SK-N-SH (cell line): ENCODE measurements at regions of chr7 and their contacts with region 1.

Region 1: DNA sequence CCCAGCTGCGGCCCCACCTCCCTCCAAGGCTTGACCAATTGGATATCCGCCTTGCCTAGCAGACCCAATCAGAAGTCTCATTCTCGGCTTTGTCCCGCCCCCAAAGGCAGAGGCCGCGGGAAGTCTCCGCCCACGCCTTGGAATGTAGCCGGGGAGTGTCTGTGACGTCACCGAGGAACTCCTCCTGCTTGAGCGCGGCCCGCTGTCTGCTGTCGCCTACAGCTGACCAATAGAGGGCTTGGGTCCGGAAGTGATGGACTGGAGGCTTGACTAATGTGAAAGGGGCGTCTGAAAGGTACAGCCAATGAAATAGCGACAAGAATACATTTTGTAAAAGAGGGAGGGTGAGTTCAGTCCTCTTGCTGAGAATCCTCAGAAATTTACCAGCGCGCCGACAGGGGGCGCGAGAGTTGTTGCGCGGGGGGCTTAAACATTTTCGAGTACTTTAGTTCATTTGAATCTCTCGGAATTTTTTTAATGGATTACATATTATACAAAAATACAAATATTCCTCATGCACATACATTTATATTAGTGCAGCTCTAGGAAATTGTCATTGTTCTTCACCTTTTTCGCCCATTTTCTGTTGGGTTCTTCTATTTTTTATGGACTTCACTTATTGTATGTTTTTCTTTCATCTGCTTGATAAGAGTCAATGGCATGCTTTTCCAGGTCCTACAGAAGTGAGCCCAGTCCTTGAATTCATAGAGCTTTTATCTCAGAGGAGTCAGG is 376 bp upstream of the CREB3L2 start:
- DNase-seq: peak; percentile 94
- H3K4me3 ChIP-seq: peak overlapping the region; percentile 84 to 93
- H3K27ac ChIP-seq: peak overlapping the region; percentile 88 to 90
- H3K4me1 ChIP-seq: peaks cover 14 to 25% of the 10 kb centered on the region in 2 experiments; a peak in 2 of 4 replicates
- H3K27me3 ChIP-seq: no peaks in the 10 kb centered on the region
- CTCF ChIP-seq: peak; percentile 100
- EP300 ChIP-seq: 0 out of 4 replicates have a peak, but pooled peaks of 1 of the 2 experiments have one; percentile 6
- RAD21 ChIP-seq: peak; percentile 72

Region 2: DNA sequence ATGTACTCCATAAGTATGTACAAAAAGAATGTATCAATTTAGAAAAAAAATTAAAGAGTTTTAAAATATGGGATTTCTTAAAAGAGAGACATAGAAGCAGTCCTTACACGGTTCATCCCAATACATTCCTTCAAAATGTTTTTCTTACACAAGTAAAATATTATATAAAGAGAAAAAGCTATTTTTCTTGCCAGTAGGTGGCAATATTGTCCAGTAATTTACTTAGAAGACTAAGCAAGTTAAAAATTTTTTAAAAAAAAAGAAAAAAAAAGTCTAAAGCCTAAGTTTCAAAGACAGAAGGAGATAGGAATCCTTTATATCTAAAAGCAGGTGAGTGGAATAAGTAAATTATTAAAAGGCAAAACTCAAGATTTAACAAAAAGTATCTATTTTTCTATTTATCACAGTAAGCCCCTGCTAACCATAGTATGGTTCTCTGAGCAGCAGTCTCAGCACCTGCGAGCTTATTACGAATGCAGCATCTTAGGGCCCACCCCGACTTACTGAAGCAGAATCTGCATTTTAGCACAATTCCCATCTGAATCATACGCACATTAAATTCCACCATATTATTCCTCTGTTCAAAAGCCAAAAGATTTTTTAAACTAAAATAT is 396.1 kb before region 1 on chr7:
- CTCF ChIA-PET with region 1: interaction called, 18 read pairs
- POLR2A ChIA-PET with region 1: no interaction called
- DNase-seq: no peak
- H3K4me3 ChIP-seq: no peak overlapping the region; a peak in 1 of 4 replicates
- H3K27ac ChIP-seq: no peak overlapping the region
- H3K4me1 ChIP-seq: no peaks in the 10 kb centered on the region; a peak in 1 of 4 replicates
- H3K27me3 ChIP-seq: no peaks in the 10 kb centered on the region
- CTCF ChIP-seq: peak; percentile 91
- EP300 ChIP-seq: no peak
- RAD21 ChIP-seq: peak; percentile 64

Region 3: GRCh38 chr7:137742051-137742450 is 260.2 kb before region 1 on chr7:
- CTCF ChIA-PET with region 1: no interaction called
- POLR2A ChIA-PET with region 1: no interaction called
- DNase-seq: no peak
- H3K4me3 ChIP-seq: no peak overlapping the region
- H3K27ac ChIP-seq: no peak overlapping the region
- H3K4me1 ChIP-seq: no peaks in the 10 kb centered on the region; a peak in 2 of 4 replicates
- H3K27me3 ChIP-seq: no peaks in the 10 kb centered on the region
- CTCF ChIP-seq: no peak
- EP300 ChIP-seq: no peak
- RAD21 ChIP-seq: no peak

Region 4: GRCh38 chr7:137920637-137921399 is 81.4 kb before region 1 on chr7:
- CTCF ChIA-PET with region 1: interaction called, 642 read pairs
- POLR2A ChIA-PET with region 1: no interaction called
- DNase-seq: no peak
- H3K4me3 ChIP-seq: no peak overlapping the region
- H3K27ac ChIP-seq: no peak overlapping the region
- H3K4me1 ChIP-seq: peaks cover 9 to 15% of the 10 kb centered on the region in 2 experiments; a peak in 3 of 4 replicates
- H3K27me3 ChIP-seq: no peaks in the 10 kb centered on the region
- CTCF ChIP-seq: no peak
- EP300 ChIP-seq: no peak
- RAD21 ChIP-seq: no peak

Region 5: DNA sequence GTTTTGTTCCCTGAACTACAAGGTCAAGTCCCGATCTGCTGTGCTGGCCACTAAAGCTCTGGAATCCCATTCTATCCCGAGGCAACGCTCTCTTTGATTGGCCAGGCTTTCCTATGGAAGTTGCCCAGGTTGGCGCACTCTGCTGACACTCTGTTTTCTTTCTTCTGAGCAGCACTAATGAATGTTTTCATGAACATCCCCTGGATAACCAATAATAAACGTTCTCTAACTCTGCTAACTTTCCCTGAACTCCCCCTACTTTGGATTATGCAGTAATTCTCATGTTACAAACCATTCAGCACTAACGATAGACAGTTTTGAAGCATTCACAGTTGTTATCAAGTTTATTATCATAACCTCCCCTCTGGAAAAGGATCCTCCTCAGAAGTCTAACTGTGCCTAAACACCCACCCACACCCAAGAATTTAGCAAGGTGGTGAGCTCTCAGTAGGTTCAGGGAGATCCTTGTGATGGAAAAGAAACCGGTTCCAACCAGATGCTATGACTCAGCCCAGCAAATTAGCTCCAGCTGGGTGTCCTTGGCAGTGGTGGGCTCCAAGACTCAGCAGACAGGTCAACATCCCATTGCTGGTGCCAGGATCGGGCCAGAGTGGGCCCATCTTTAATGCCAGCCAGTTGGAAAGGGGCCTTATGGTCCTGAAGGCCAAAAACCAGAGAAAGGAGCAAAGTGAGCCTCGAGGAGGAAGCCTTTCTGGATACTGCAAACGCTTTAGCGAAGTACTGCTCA is 68.8 kb before region 1 on chr7:
- CTCF ChIA-PET with region 1: interaction called, 11 read pairs
- POLR2A ChIA-PET with region 1: no interaction called
- DNase-seq: peak; percentile 47
- H3K4me3 ChIP-seq: no peak overlapping the region
- H3K27ac ChIP-seq: peak overlapping the region; percentile 75 to 92
- H3K4me1 ChIP-seq: peaks cover 36 to 54% of the 10 kb centered on the region in 2 experiments
- H3K27me3 ChIP-seq: no peaks in the 10 kb centered on the region
- CTCF ChIP-seq: no peak
- EP300 ChIP-seq: peak in 1 of 2 experiments; percentile 81; a peak in 2 of 4 replicates
- RAD21 ChIP-seq: no peak

Region 6: GRCh38 chr7:137985253-137985896 is 16.9 kb before region 1 on chr7:
- CTCF ChIA-PET with region 1: interaction called, 25 read pairs
- POLR2A ChIA-PET with region 1: no interaction called
- DNase-seq: no peak
- H3K4me3 ChIP-seq: no peak overlapping the region
- H3K27ac ChIP-seq: no peak overlapping the region
- H3K4me1 ChIP-seq: peaks cover 44 to 46% of the 10 kb centered on the region in 2 experiments
- H3K27me3 ChIP-seq: no peaks in the 10 kb centered on the region
- CTCF ChIP-seq: no peak
- EP300 ChIP-seq: no peak
- RAD21 ChIP-seq: no peak

Region 7: GRCh38 chr7:138015096-138015495 is 12.8 kb after region 1 on chr7:
- CTCF ChIA-PET with region 1: interaction called, 60 read pairs
- POLR2A ChIA-PET with region 1: no interaction called
- DNase-seq: no peak
- H3K4me3 ChIP-seq: no peak overlapping the region
- H3K27ac ChIP-seq: no peak overlapping the region
- H3K4me1 ChIP-seq: no peaks in the 10 kb centered on the region
- H3K27me3 ChIP-seq: no peaks in the 10 kb centered on the region
- CTCF ChIP-seq: no peak
- EP300 ChIP-seq: no peak
- RAD21 ChIP-seq: no peak